ENCODE measurements at regions of chr15 and their contacts with region 1.

Region 1: GRCh38 chr15:33737687-33738601 is 230.4 kb upstream of the CHRM5 start:
- DNase-seq: peak; percentile 15 to 79
- H3K4me3 ChIP-seq: peak overlapping the region; percentile 16 to 58 (median 30); a peak in 6 of 8 replicates
- H3K27ac ChIP-seq: no peak overlapping the region
- H3K4me1 ChIP-seq: peaks cover 0 to 6% (median 3%) of the 10 kb centered on the region in 4 experiments; a peak in 2 of 7 replicates
- H3K27me3 ChIP-seq: 0 out of 7 replicates have a peak, but pooled peaks cover 0 to 4% (median 0%) of the 10 kb centered on the region in 4 experiments
- CTCF ChIP-seq: peak; percentile 55 to 77 (median 72)
- EP300 ChIP-seq: no peak
- POLR2A ChIP-seq: no peak
- RAD21 ChIP-seq: peak; percentile 64 to 79

Region 2: GRCh38 chr15:33662014-33662413 is 75.9 kb before region 1 on chr15:
- CTCF ChIA-PET with region 1: no interaction called
- POLR2A ChIA-PET with region 1: no interaction called
- DNase-seq: no peak
- H3K4me3 ChIP-seq: no peak overlapping the region
- H3K27ac ChIP-seq: no peak overlapping the region
- H3K4me1 ChIP-seq: no peaks in the 10 kb centered on the region
- H3K27me3 ChIP-seq: no peaks in the 10 kb centered on the region
- CTCF ChIP-seq: no peak
- EP300 ChIP-seq: no peak
- POLR2A ChIP-seq: no peak
- RAD21 ChIP-seq: no peak

Region 3: DNA sequence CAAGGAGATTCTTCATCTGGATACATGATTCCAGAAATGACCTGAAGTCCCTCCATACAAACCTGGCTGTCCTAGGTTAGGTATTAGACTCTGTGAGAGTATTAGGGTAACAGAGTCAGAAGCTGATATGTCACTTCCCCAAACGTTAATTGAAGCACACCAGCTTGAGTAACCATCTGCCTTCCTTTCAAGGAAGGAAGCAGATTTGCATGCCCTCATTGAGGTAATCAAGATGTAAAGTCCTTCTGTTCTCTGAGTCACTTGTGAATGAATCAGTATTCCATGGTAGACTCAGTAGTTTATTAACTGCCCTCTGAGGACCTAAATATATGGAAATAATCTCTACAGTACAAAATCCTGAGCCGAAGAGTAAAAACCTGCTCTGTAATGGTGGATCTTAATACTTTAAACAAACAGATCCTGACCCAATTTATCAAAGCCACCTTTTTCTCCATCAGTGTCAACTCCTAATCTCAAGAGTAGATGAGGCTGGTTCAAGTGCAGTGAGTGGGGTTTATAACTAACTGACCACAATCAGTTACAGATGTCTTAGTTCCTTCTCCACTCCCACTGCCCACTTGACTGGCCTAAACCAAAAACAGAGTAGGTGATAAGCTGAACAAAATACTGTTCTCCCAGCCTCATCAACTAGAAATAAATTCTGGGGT is 15.8 kb before region 1 on chr15:
- CTCF ChIA-PET with region 1: interaction called, 89 read pairs
- POLR2A ChIA-PET with region 1: interaction called, 3 read pairs
- DNase-seq: no peak
- H3K4me3 ChIP-seq: no peak overlapping the region
- H3K27ac ChIP-seq: no peak overlapping the region
- H3K4me1 ChIP-seq: no peaks in the 10 kb centered on the region
- H3K27me3 ChIP-seq: no peaks in the 10 kb centered on the region
- CTCF ChIP-seq: no peak
- EP300 ChIP-seq: no peak
- POLR2A ChIP-seq: no peak
- RAD21 ChIP-seq: no peak

Region 4: DNA sequence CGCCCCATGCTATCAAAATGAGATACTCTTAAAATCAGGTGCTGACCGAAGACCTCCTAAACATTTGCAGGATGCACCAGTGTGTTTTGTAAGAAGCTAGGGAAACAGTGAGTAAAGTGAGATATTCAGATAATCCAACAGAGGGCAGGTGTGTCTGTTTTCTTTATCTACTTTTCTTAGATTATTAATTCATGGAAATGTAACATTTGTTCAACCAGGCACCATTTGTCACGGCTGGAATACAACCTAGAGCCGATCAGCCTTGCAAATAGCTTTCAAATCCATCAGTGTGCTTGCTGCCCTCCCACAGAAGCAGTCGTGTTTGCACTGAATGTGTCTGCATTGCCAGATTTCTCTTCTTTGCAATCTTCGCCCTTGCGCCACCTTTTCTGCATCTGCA is 28.4 kb after region 1 on chr15:
- CTCF ChIA-PET with region 1: interaction called, 13 read pairs
- POLR2A ChIA-PET with region 1: no interaction called
- DNase-seq: no peak
- H3K4me3 ChIP-seq: no peak overlapping the region
- H3K27ac ChIP-seq: no peak overlapping the region
- H3K4me1 ChIP-seq: no peaks in the 10 kb centered on the region; a peak in 2 of 7 replicates
- H3K27me3 ChIP-seq: no peaks in the 10 kb centered on the region
- CTCF ChIP-seq: peak in 1 of 3 experiments; percentile 12; a peak in 1 of 4 replicates
- EP300 ChIP-seq: no peak
- POLR2A ChIP-seq: no peak
- RAD21 ChIP-seq: peak; percentile 21 to 22; a peak in 3 of 4 replicates

Region 5: GRCh38 chr15:33963831-33964664 is 226.1 kb after region 1 on chr15:
- CTCF ChIA-PET with region 1: interaction called, 27 read pairs
- POLR2A ChIA-PET with region 1: no interaction called
- DNase-seq: no peak
- H3K4me3 ChIP-seq: no peak overlapping the region
- H3K27ac ChIP-seq: no peak overlapping the region
- H3K4me1 ChIP-seq: no peaks in the 10 kb centered on the region
- H3K27me3 ChIP-seq: no peaks in the 10 kb centered on the region
- CTCF ChIP-seq: peak in 2 of 3 experiments; percentile 51 to 67; a peak in 2 of 4 replicates
- EP300 ChIP-seq: no peak
- POLR2A ChIP-seq: no peak
- RAD21 ChIP-seq: peak; percentile 80

Region 6: GRCh38 chr15:33994005-33994615 is 256.2 kb after region 1 on chr15:
- CTCF ChIA-PET with region 1: interaction called, 34 read pairs
- POLR2A ChIA-PET with region 1: no interaction called
- DNase-seq: peak; percentile 10 to 60
- H3K4me3 ChIP-seq: no peak overlapping the region
- H3K27ac ChIP-seq: no peak overlapping the region
- H3K4me1 ChIP-seq: no peaks in the 10 kb centered on the region
- H3K27me3 ChIP-seq: no peaks in the 10 kb centered on the region
- CTCF ChIP-seq: peak; percentile 60 to 76 (median 69)
- EP300 ChIP-seq: no peak
- POLR2A ChIP-seq: no peak
- RAD21 ChIP-seq: peak; percentile 78 to 83